ENCODE measurements at regions of chr10 and their contacts with region 1.

Region 1: GRCh38 chr10:66180581-66181318 is 745.1 kb upstream of the LRRTM3 start:
- DNase-seq: peak; percentile 36
- H3K4me3 Mint-ChIP-seq: no peak overlapping the region
- H3K27ac Mint-ChIP-seq: no peak overlapping the region
- H3K4me1 Mint-ChIP-seq: peaks cover 9% of the 10 kb centered on the region
- H3K27me3 Mint-ChIP-seq: no peaks in the 10 kb centered on the region
- CTCF ChIP-seq: peak; percentile 36

Region 2: DNA sequence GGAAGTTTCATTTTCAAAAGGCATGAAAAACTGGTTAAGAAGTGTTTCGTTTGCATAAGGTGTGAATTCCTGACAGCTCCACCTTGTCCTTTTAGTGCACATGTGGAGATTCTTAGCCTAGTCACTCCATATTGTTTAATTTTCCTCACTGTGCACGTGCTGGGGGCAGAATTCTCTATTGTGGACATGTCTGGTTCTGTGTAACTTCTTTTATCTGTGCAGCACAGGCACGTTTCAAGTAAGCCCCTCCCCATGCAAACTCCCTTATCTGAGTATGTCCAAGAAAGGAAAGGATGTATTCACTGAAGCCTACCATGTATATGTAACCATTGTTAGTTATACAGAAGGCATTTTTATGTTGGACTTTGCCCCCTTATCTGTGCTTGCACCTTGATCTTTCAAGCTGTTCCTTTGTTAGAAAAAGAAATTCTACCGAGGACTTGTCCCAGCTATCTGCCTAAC is 1313.2 kb before region 1 on chr10:
- CTCF ChIA-PET with region 1: no interaction called
- intact Hi-C with region 1: loop called (anchors 10 kb)
- DNase-seq: peak; percentile 8
- H3K4me3 Mint-ChIP-seq: peak overlapping the region; percentile 22
- H3K27ac Mint-ChIP-seq: peak overlapping the region; percentile 52
- H3K4me1 Mint-ChIP-seq: peaks cover 21% of the 10 kb centered on the region
- H3K27me3 Mint-ChIP-seq: no peaks in the 10 kb centered on the region
- CTCF ChIP-seq: no peak

Region 3: GRCh38 chr10:65358565-65358964 is 822.2 kb before region 1 on chr10:
- CTCF ChIA-PET with region 1: interaction called, 5 read pairs
- intact Hi-C with region 1: loop called (anchors 5 kb)
- DNase-seq: peak; percentile 46
- H3K4me3 Mint-ChIP-seq: no peak overlapping the region
- H3K27ac Mint-ChIP-seq: no peak overlapping the region
- H3K4me1 Mint-ChIP-seq: no peaks in the 10 kb centered on the region
- H3K27me3 Mint-ChIP-seq: no peaks in the 10 kb centered on the region
- CTCF ChIP-seq: peak; percentile 40

Region 4: DNA sequence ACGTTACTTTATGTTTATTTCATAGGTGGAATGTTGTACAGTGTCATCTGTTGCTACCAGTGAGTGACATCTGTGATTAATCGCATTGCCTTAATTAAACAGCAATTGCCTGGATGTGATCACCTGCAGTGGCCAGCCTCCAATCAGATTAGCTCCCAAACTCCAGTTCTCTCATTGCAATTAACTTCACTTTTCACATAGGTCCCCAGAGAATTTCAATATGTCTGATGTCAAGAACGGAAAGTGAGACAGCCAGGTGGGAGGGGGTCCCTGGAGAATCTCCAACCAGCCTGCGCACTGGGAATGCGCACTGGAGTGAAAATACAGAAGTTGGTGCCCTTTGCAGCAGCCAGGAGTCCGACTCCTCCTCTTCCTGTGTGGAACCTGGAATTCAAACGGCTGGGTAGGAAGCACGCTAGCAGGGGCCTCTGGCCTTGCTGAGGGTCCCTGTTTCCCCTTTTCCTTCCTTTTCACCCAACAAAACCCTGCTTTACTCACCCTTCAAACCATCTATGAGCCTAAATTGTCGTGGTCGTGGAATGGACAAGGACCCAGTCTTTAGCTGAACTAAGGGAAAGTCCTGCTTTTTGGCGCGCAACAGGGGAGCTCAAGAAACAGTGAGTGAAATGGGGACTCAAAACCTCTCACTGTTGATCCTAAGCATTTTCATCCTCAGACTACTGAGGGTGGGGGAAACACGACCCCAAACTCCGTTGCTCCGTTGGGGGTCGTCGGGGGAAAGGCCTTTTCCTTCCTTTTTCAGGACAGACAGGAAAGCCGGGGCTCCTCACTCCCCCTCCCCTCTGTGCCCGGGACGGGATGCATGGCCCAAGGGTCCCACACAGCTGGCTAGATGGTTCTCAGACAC is 610.4 kb before region 1 on chr10:
- CTCF ChIA-PET with region 1: no interaction called
- intact Hi-C with region 1: loop called (anchors 10 kb)
- DNase-seq: peak; percentile 76
- H3K4me3 Mint-ChIP-seq: peak overlapping the region; percentile 83
- H3K27ac Mint-ChIP-seq: peak overlapping the region; percentile 79
- H3K4me1 Mint-ChIP-seq: peaks cover 9% of the 10 kb centered on the region
- H3K27me3 Mint-ChIP-seq: no peaks in the 10 kb centered on the region
- CTCF ChIP-seq: no peak

Region 5: DNA sequence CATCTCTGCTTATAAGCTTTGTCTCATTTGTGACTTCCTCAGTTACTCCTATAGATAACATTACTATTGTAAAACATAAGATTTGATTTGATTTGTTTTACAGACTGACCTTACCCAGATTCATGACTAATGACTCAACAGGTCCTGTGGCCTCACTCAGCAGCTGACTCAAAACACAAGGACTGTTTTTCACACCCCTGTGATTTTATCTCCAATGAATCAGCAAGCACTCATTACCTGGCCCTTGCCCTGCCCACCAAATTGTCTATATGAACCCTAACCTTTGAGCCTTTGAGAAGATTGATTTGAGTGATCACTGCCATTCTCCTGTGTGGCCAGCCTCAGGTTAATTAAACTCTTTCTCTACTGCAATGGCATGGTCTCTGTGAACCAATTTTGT is 319.5 kb before region 1 on chr10:
- CTCF ChIA-PET with region 1: no interaction called
- intact Hi-C with region 1: no loop called
- DNase-seq: peak; percentile 28
- H3K4me3 Mint-ChIP-seq: no peak overlapping the region
- H3K27ac Mint-ChIP-seq: peak overlapping the region; percentile 5
- H3K4me1 Mint-ChIP-seq: peaks cover 22% of the 10 kb centered on the region
- H3K27me3 Mint-ChIP-seq: no peaks in the 10 kb centered on the region
- CTCF ChIP-seq: no peak

Region 6: DNA sequence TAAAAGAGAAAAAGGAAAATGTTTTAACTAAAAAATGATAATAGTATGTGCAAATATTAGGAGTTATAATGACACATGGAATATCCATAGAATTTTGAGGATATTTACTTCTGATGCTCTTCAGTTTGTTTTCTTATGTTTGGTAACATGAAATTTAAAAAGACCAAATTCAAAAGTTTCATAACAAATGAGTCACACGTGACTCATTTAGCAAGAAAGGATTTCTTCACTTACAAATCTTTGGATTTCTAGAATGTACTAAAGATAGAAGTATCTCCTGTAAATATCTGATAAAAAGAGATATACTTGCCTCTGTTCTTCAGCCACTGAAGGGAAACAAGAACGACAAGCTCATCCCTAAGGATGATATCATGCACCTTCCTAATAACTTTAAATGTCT is 29.4 kb before region 1 on chr10:
- CTCF ChIA-PET with region 1: no interaction called
- intact Hi-C with region 1: no loop called
- DNase-seq: no peak
- H3K4me3 Mint-ChIP-seq: no peak overlapping the region
- H3K27ac Mint-ChIP-seq: no peak overlapping the region
- H3K4me1 Mint-ChIP-seq: no peaks in the 10 kb centered on the region
- H3K27me3 Mint-ChIP-seq: no peaks in the 10 kb centered on the region
- CTCF ChIP-seq: no peak

Region 7: DNA sequence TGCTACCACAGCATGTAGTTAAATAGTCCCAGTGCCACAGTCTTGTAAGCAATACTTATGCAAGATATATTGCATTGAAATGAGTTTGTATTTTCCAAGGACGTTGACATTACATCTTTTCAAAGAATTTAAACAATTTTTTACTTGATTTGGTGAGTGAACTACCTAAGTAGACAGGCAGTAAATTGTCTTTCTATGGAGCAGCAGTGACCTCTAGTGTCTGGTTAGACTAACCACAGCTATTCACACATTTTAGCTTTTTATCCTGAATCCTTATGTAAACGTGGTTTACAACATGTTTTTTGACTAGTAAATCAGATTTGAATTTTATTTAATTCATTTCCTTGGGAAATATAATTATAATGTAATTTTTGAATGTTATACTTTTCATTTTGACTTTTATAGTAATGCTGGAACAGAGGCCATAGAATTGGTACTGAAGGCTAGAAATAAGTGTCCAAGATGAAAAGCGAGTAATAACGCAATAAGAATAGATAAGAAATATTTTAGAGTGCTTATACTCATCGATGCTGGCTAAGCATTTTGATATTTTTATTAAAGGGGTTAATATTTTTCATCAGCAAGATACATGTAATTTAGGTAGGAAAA is 750.7 kb after region 1 on chr10:
- CTCF ChIA-PET with region 1: no interaction called
- intact Hi-C with region 1: loop called (anchors 5 kb)
- DNase-seq: peak; percentile 44
- H3K4me3 Mint-ChIP-seq: no peak overlapping the region
- H3K27ac Mint-ChIP-seq: no peak overlapping the region
- H3K4me1 Mint-ChIP-seq: no peaks in the 10 kb centered on the region
- H3K27me3 Mint-ChIP-seq: peaks cover 48% of the 10 kb centered on the region
- CTCF ChIP-seq: peak; percentile 74